ENCODE measurements at regions of chr6 and their contacts with region 1.

Region 1: DNA sequence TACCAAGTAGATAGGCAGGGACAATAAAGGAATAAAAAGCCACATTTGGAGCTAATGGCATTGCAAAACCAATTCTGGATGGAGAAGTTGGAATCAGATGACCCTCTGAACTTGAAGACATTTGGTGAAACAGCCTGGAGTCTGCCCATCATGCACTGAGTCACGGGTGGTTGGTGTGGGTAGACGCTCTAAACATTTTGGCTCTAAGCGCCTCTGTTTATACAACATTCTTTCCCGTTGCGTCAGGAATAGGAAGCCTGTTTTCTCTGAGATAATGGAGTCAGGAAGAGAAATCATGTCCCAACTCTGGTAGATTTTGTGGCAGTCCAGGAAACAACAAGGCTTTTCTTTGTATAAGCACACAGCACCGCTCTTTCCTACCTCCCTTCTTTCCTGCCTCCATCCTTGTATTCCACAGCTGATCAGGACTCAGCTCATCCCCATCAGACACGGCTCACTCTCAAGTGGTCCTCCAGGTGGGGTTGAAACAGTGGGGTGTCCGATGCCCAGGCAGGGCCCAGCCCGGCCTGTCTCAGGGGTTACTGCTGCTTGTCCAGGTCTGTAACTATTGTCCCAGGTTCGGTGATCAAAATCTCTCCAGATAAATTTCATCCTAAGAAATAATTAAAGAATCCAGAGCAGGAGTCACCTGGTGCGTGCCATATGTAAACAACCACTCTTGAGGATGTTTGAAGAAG is 12.1 kb upstream of the RAMACL start:
- DNase-seq: peak; percentile 91
- H3K4me3 Mint-ChIP-seq: peak overlapping the region; percentile 43
- H3K27ac Mint-ChIP-seq: peak overlapping the region; percentile 93
- H3K4me1 Mint-ChIP-seq: peaks cover 60% of the 10 kb centered on the region
- H3K27me3 Mint-ChIP-seq: no peaks in the 10 kb centered on the region
- CTCF ChIP-seq: no peak

Region 2: DNA sequence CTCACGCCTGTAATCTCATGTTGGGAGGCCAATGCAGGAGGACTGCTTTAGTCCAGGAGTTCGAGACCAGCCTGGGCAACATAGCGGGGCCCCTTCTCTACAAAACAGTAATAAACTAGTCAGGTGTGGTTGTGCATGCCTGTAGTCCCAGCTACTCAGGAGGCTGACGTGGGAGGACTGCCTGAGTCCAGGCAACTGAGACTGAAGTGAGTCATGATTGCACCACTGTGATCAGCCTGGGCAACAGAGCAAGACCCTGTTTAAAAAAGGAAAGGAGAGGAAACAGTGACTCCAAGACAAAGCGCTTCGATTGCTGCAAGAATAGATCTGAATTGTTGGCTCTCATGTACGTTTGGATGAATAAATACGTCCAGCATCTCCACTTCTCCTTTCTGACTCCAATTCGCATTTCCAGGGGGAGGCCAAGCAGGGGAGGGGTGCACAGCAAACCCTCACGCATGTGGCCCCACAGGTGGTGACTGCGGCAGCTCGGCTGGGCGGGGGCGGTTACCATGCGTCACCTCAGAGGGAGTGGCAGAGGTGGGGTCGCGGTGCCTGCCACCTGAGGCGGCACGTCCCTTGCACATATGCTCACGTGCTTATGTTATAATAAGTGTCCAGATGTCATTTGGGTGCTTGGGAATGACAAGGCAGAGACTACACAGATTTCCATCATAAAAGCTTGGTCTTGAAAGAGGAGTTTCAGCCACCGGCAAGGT is 120.8 kb before region 1 on chr6:
- CTCF ChIA-PET with region 1: no interaction called
- POLR2A ChIA-PET with region 1: no interaction called
- intact Hi-C with region 1: no loop called
- DNase-seq: no peak
- H3K4me3 Mint-ChIP-seq: no peak overlapping the region
- H3K27ac Mint-ChIP-seq: no peak overlapping the region
- H3K4me1 Mint-ChIP-seq: no peaks in the 10 kb centered on the region
- H3K27me3 Mint-ChIP-seq: no peaks in the 10 kb centered on the region
- CTCF ChIP-seq: no peak

Region 3: GRCh38 chr6:166612471-166612881 is 13.9 kb after region 1 on chr6:
- CTCF ChIA-PET with region 1: interaction called, 5 read pairs
- POLR2A ChIA-PET with region 1: interaction called, 13 read pairs
- intact Hi-C with region 1: no loop called
- DNase-seq: no peak
- H3K4me3 Mint-ChIP-seq: no peak overlapping the region
- H3K27ac Mint-ChIP-seq: peak overlapping the region; percentile 86
- H3K4me1 Mint-ChIP-seq: peaks cover 55% of the 10 kb centered on the region
- H3K27me3 Mint-ChIP-seq: no peaks in the 10 kb centered on the region
- CTCF ChIP-seq: no peak

Region 4: GRCh38 chr6:166619912-166620311 is 21.3 kb after region 1 on chr6:
- CTCF ChIA-PET with region 1: interaction called, 9 read pairs
- POLR2A ChIA-PET with region 1: interaction called, 89 read pairs
- intact Hi-C with region 1: loop called (anchors 2 kb)
- DNase-seq: peak; percentile 94
- H3K4me3 Mint-ChIP-seq: peak overlapping the region; percentile 67
- H3K27ac Mint-ChIP-seq: peak overlapping the region; percentile 81
- H3K4me1 Mint-ChIP-seq: peaks cover 63% of the 10 kb centered on the region
- H3K27me3 Mint-ChIP-seq: no peaks in the 10 kb centered on the region
- CTCF ChIP-seq: no peak

Measured in MCF 10A (cell line).